Activated naive CD4-positive, alpha-beta T cell treated with anti-CD3 and anti-CD28 coated beads for 36 hours (primary cell): ENCODE measurements at regions of chr9 and their contacts with region 1.

Region 1: DNA sequence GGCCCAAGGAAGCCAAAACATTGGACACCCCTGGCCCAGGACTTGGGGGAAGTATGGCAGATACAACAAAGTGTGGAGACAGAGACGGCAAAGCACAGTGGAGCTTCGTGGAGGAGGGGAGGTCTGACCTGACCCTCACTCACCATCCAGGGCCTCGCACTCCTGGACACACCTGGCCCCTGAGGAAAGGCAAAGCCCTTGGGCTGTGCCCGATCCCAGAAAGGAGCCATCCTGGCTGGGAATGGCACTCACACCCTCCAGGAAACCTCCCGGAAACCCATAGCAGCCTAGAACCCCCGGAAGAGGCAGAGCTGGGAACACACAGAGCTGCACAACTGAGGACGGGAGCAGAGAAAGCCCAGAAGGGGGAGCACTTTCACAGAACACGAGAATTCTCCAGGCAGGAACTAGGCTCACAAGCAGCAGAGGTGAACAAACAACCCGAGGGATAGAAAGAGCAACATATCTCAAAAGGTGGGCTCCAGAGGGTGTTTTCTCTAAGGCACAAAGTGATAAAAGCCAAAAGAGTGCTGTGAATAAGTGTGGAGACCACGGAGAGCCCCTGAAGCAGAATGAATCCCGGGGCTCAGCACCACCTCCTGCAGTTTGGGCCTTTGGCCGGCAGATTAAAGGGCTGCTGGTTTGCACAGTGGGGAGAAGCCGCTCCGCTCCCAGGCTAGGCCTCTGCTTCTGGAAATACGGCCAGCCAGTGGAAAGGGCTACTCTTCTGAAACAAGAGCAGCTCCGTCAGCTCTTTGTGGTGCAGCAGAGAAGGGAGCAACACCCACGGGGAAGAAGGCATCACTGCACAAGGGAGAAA is 108.2 kb downstream of the UBE2R2 start:
- DNase-seq: peak; percentile 48
- H3K4me3 Mint-ChIP-seq: no peak overlapping the region
- H3K27ac Mint-ChIP-seq: no peak overlapping the region
- H3K4me1 Mint-ChIP-seq: no peaks in the 10 kb centered on the region
- H3K27me3 Mint-ChIP-seq: no peaks in the 10 kb centered on the region

Region 2: GRCh38 chr9:33081128-33081851 is 843.9 kb before region 1 on chr9:
- CTCF ChIA-PET with region 1: no interaction called
- intact Hi-C with region 1: no loop called
- DNase-seq: peak; percentile 88
- H3K4me3 Mint-ChIP-seq: no peak overlapping the region
- H3K27ac Mint-ChIP-seq: no peak overlapping the region
- H3K4me1 Mint-ChIP-seq: peaks cover 34% of the 10 kb centered on the region
- H3K27me3 Mint-ChIP-seq: no peaks in the 10 kb centered on the region

Region 3: GRCh38 chr9:33659921-33660320 is 265.3 kb before region 1 on chr9:
- CTCF ChIA-PET with region 1: no interaction called
- intact Hi-C with region 1: no loop called
- DNase-seq: no peak
- H3K4me3 Mint-ChIP-seq: no peak overlapping the region
- H3K27ac Mint-ChIP-seq: no peak overlapping the region
- H3K4me1 Mint-ChIP-seq: no peaks in the 10 kb centered on the region
- H3K27me3 Mint-ChIP-seq: peaks cover 3% of the 10 kb centered on the region

Region 4: GRCh38 chr9:33913541-33913940 is 11.6 kb before region 1 on chr9:
- CTCF ChIA-PET with region 1: interaction called, 21 read pairs
- intact Hi-C with region 1: no loop called
- DNase-seq: no peak
- H3K4me3 Mint-ChIP-seq: no peak overlapping the region
- H3K27ac Mint-ChIP-seq: peak overlapping the region; percentile 24
- H3K4me1 Mint-ChIP-seq: no peaks in the 10 kb centered on the region
- H3K27me3 Mint-ChIP-seq: no peaks in the 10 kb centered on the region

Region 5: GRCh38 chr9:34072868-34073590 is 147.8 kb after region 1 on chr9:
- CTCF ChIA-PET with region 1: interaction called, 7 read pairs
- intact Hi-C with region 1: loop called (anchors 5 kb)
- DNase-seq: no peak
- H3K4me3 Mint-ChIP-seq: no peak overlapping the region
- H3K27ac Mint-ChIP-seq: no peak overlapping the region
- H3K4me1 Mint-ChIP-seq: no peaks in the 10 kb centered on the region
- H3K27me3 Mint-ChIP-seq: no peaks in the 10 kb centered on the region